A549 (cell line): ENCODE measurements at regions of chr6 and their contacts with region 1.

Region 1: DNA sequence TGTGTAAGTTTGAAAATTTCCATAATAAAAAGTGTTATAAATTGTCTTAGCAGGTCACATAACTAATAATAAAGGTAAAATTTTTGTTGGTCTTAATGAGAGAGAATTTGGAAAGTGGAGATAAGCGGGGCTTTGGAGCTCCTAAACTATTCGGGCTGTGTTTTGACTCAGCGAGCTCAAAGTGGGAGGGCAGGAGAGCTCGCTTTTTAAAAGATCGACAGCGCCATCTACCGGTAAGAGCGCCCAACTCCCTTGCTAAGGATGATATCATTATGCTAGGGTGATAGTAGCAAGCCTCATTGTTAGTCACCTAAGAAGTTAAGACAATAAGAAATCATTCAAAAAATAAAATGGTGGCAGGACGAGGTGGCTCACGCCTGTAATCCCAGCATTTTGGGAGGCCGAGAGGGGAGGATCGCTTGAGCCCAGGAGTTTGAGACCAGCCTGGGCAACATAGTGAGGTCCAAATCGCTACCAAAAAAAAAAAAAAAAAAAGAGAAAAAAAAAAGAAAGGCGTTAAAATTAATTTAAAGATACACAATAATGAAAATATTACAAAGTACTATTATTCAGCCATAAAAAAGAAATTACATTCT is 24.8 kb downstream of the C6orf15 start:
- DNase-seq: peak; percentile 76 to 81
- ATAC-seq: peak; percentile 97 to 98
- H3K4me3 ChIP-seq: no peak overlapping the region
- H3K27ac ChIP-seq: no peak overlapping the region
- H3K4me1 ChIP-seq: peaks cover 6% of the 10 kb centered on the region; the same call in 1 of the 3 replicates
- CTCF ChIP-seq: peak; percentile 68
- EP300 ChIP-seq: no peak
- POLR2A ChIP-seq: no peak
- RAD21 ChIP-seq: peak; percentile 72 to 76

Region 2: GRCh38 chr6:30960907-30961673 is 126.5 kb before region 1 on chr6:
- CTCF ChIA-PET with region 1: no interaction called
- POLR2A ChIA-PET with region 1: no interaction called
- DNase-seq: no peak
- ATAC-seq: peak in 1 of 2 experiments; percentile 21; a peak in 1 of 6 replicates
- H3K4me3 ChIP-seq: no peak overlapping the region
- H3K27ac ChIP-seq: no peak overlapping the region
- H3K4me1 ChIP-seq: no peaks in the 10 kb centered on the region
- CTCF ChIP-seq: no peak
- EP300 ChIP-seq: no peak
- POLR2A ChIP-seq: no peak
- RAD21 ChIP-seq: no peak

Region 3: GRCh38 chr6:31074401-31074800 is 13.2 kb before region 1 on chr6:
- CTCF ChIA-PET with region 1: interaction called, 63 read pairs
- POLR2A ChIA-PET with region 1: no interaction called
- DNase-seq: no peak
- ATAC-seq: no peak
- H3K4me3 ChIP-seq: no peak overlapping the region
- H3K27ac ChIP-seq: no peak overlapping the region
- H3K4me1 ChIP-seq: peaks cover 12% of the 10 kb centered on the region
- CTCF ChIP-seq: no peak
- EP300 ChIP-seq: no peak
- POLR2A ChIP-seq: no peak
- RAD21 ChIP-seq: no peak

Region 4: GRCh38 chr6:31103136-31103535 is 15.5 kb after region 1 on chr6:
- CTCF ChIA-PET with region 1: interaction called, 23 read pairs
- POLR2A ChIA-PET with region 1: no interaction called
- DNase-seq: no peak
- ATAC-seq: no peak
- H3K4me3 ChIP-seq: no peak overlapping the region
- H3K27ac ChIP-seq: no peak overlapping the region
- H3K4me1 ChIP-seq: no peaks in the 10 kb centered on the region
- CTCF ChIP-seq: no peak
- EP300 ChIP-seq: no peak
- POLR2A ChIP-seq: no peak
- RAD21 ChIP-seq: no peak